HCT116 (cell line): ENCODE measurements at regions of chr1 and their contacts with region 1.

Region 1: GRCh38 chr1:182054698-182055326 is 6.7 kb downstream of the ZNF648 start:
- DNase-seq: peak; percentile 26
- ATAC-seq: peak; percentile 84
- H3K4me3 ChIP-seq: no peak overlapping the region
- H3K27ac ChIP-seq: no peak overlapping the region
- H3K4me1 ChIP-seq: no peaks in the 10 kb centered on the region
- H3K27me3 ChIP-seq: no peaks in the 10 kb centered on the region
- CTCF ChIP-seq: peak; percentile 51 to 68 (median 60); a peak in 5 of 6 replicates
- POLR2A ChIP-seq: no peak
- RAD21 ChIP-seq: peak; percentile 70

Region 2: DNA sequence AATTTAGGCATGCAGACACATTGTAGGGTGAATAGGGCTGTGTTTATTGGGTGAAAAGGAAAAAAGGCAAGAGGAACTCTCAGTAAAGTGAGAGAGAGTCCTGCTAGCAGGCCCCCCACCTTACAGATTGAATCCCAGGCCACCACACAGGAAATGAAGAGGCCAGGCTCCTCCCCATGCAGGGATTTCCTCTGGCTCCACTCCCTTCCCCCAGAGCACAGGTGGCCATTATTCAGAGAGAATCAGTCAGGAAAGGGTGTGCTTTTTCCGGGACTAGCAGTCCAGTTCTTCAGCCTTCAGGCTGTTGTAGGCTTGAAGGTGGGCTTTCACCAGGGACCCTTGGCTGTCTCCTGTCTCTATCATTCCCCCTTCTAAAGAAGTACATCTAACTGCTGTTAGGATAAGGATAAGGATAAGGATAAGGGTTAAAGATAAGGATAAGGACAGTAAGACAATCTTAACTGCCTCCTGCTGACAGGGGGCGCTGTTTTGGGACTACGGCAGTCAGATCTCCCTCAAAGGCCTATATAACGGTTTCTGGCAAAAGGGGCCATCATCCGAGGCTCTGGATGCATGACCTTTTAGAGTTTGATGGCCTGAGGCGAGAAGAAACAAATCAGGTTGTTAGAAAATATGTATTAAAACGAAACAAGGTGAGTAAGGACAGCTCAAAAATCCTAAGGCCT is 19.6 kb before region 1 on chr1:
- CTCF ChIA-PET with region 1: interaction called, 10 read pairs
- POLR2A ChIA-PET with region 1: no interaction called
- RAD21 ChIA-PET with region 1: no interaction called
- intact Hi-C with region 1: no loop called
- DNase-seq: no peak
- ATAC-seq: peak; percentile 78
- H3K4me3 ChIP-seq: no peak overlapping the region
- H3K27ac ChIP-seq: no peak overlapping the region
- H3K4me1 ChIP-seq: peaks cover 5 to 8% of the 10 kb centered on the region in 2 experiments; a peak in 3 of 4 replicates
- H3K27me3 ChIP-seq: no peaks in the 10 kb centered on the region
- CTCF ChIP-seq: peak in 2 of 3 experiments; percentile 57 to 67; a peak in 4 of 6 replicates
- POLR2A ChIP-seq: no peak
- RAD21 ChIP-seq: no peak

Region 3: DNA sequence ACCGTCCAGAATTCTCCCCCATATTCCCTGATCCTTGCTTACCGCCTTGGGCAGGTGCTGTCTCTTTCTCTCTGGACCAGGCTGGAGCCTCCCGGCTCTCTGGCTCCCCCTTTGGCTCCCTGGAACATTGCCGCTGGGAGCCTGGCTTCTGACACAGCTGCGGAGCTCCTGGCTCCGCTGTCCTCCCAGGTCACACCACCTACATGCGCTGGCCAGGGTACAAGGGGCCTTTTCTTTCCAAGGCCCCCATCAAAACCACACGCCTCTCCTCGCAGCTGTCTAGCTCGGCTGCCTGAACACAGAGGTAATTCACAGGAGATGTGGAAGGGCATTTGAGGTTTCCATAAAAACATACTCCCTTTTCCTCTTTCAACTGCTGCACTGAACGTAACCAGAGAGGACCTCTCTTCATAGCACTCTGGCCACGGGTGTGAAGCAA is 14.2 kb after region 1 on chr1:
- CTCF ChIA-PET with region 1: interaction called, 10 read pairs
- POLR2A ChIA-PET with region 1: no interaction called
- RAD21 ChIA-PET with region 1: no interaction called
- intact Hi-C with region 1: no loop called
- DNase-seq: peak; percentile 18
- ATAC-seq: peak; percentile 98
- H3K4me3 ChIP-seq: no peak overlapping the region
- H3K27ac ChIP-seq: no peak overlapping the region
- H3K4me1 ChIP-seq: no peaks in the 10 kb centered on the region; a peak in 2 of 4 replicates
- H3K27me3 ChIP-seq: no peaks in the 10 kb centered on the region
- CTCF ChIP-seq: peak in 2 of 3 experiments; percentile 52 to 72; a peak in 4 of 6 replicates
- POLR2A ChIP-seq: no peak
- RAD21 ChIP-seq: no peak

Region 4: DNA sequence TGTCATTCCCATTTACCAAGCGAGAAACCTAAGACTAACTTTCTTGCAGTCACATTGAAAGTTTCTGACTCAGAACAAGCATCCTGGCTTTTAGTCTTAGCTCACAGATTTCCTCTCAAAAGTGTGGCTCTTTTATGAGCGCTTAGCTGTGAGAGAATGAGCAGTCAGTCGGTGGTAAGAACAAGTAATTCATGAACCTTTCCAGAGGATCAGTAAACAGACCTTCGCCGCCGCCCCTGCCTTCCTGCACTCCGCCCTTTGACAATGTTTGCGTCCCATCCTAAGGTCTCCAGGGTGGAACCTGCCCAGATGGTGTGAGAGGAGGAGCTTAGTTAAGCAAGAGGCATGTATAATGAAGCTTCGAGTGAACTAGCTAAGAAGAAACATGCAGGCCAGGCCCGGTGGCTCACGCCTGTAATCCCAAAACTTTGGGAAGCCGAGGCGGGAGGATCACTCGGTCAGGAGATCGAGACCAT is 194.4 kb after region 1 on chr1:
- CTCF ChIA-PET with region 1: no interaction called
- POLR2A ChIA-PET with region 1: no interaction called
- RAD21 ChIA-PET with region 1: no interaction called
- intact Hi-C with region 1: no loop called
- DNase-seq: no peak
- ATAC-seq: no peak
- H3K4me3 ChIP-seq: no peak overlapping the region
- H3K27ac ChIP-seq: no peak overlapping the region
- H3K4me1 ChIP-seq: no peaks in the 10 kb centered on the region
- H3K27me3 ChIP-seq: no peaks in the 10 kb centered on the region
- CTCF ChIP-seq: no peak
- POLR2A ChIP-seq: no peak
- RAD21 ChIP-seq: no peak